ENCODE measurements at regions of chr15 and their contacts with region 1.

Region 1: GRCh38 chr15:59528965-59529402 is 82.6 kb upstream of the GCNT3 start:
- DNase-seq: peak; percentile 54 to 81 (median 59)
- ATAC-seq: peak; percentile 80
- H3K4me3 ChIP-seq: no peak overlapping the region
- H3K4me3 Mint-ChIP-seq: no peak overlapping the region
- H3K27ac ChIP-seq: no peak overlapping the region
- H3K27ac Mint-ChIP-seq: no peak overlapping the region
- H3K4me1 ChIP-seq: peaks cover 15% of the 10 kb centered on the region
- H3K4me1 Mint-ChIP-seq: peaks cover 13% of the 10 kb centered on the region
- H3K27me3 ChIP-seq: no peaks in the 10 kb centered on the region
- H3K27me3 Mint-ChIP-seq: peaks cover 3% of the 10 kb centered on the region
- CTCF ChIP-seq: peak; percentile 85

Region 2: DNA sequence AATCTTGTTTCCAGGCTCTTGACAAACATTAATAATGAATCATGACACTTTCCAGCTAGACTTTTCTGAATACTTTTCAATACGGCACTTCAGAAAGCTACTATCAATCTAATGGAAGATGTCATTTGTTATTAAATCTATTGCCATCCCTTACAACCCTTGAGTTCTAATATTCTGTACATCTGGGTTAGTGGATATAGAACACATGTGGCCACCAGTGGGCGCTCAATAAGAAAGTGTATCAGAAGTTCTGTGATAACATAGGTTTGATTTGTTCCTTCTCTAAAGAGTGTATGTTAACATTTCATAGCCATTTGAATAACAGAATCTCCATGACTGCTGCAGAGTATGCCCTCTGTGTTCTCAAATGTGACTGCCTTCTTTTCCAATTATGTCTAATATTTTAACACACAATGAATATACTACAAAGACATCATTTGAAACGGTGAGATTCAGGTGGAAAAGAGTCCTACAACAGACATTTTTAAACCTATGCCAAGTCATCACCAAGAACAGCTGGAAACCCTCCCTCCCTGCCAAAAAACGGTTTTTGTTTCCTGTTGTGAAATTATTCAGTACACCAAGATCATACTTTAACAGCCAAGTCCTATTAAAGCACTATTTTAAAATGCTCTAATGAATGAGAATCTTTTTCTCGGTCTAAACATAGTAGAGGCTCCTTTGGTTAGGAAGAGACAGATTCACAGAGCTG is 1485.6 kb before region 1 on chr15:
- CTCF ChIA-PET with region 1: no interaction called
- POLR2A ChIA-PET with region 1: no interaction called
- intact Hi-C with region 1: loop called in 1 of 2 experiments (anchors 5 kb)
- DNase-seq: peak in 9 of 14 experiments; percentile 13 to 56 (median 37)
- ATAC-seq: no peak
- H3K4me3 ChIP-seq: no peak overlapping the region
- H3K4me3 Mint-ChIP-seq: no peak overlapping the region
- H3K27ac ChIP-seq: no peak overlapping the region
- H3K27ac Mint-ChIP-seq: no peak overlapping the region
- H3K4me1 ChIP-seq: no peaks in the 10 kb centered on the region
- H3K4me1 Mint-ChIP-seq: no peaks in the 10 kb centered on the region
- H3K27me3 ChIP-seq: peaks cover 2 to 18% of the 10 kb centered on the region in 2 experiments
- H3K27me3 Mint-ChIP-seq: peaks cover 65% of the 10 kb centered on the region
- CTCF ChIP-seq: peak; percentile 63

Region 3: GRCh38 chr15:58852347-58852746 is 676.6 kb before region 1 on chr15:
- CTCF ChIA-PET with region 1: no interaction called
- POLR2A ChIA-PET with region 1: no interaction called
- intact Hi-C with region 1: no loop called
- DNase-seq: no peak
- ATAC-seq: no peak
- H3K4me3 ChIP-seq: no peak overlapping the region
- H3K4me3 Mint-ChIP-seq: no peak overlapping the region
- H3K27ac ChIP-seq: no peak overlapping the region
- H3K27ac Mint-ChIP-seq: no peak overlapping the region
- H3K4me1 ChIP-seq: no peaks in the 10 kb centered on the region
- H3K4me1 Mint-ChIP-seq: no peaks in the 10 kb centered on the region
- H3K27me3 ChIP-seq: no peaks in the 10 kb centered on the region
- H3K27me3 Mint-ChIP-seq: no peaks in the 10 kb centered on the region
- CTCF ChIP-seq: no peak

Region 4: GRCh38 chr15:58980351-58980939 is 548.5 kb before region 1 on chr15:
- CTCF ChIA-PET with region 1: interaction called, 3 read pairs
- POLR2A ChIA-PET with region 1: interaction called, 3 read pairs
- intact Hi-C with region 1: loop called (anchors 2 to 10 kb)
- DNase-seq: peak in 3 of 14 experiments; percentile 66 to 72 (median 70)
- ATAC-seq: peak; percentile 50
- H3K4me3 ChIP-seq: no peak overlapping the region
- H3K4me3 Mint-ChIP-seq: no peak overlapping the region
- H3K27ac ChIP-seq: no peak overlapping the region
- H3K27ac Mint-ChIP-seq: no peak overlapping the region
- H3K4me1 ChIP-seq: peaks cover 18% of the 10 kb centered on the region
- H3K4me1 Mint-ChIP-seq: peaks cover 32% of the 10 kb centered on the region
- H3K27me3 ChIP-seq: no peaks in the 10 kb centered on the region
- H3K27me3 Mint-ChIP-seq: no peaks in the 10 kb centered on the region
- CTCF ChIP-seq: peak; percentile 78

Region 5: DNA sequence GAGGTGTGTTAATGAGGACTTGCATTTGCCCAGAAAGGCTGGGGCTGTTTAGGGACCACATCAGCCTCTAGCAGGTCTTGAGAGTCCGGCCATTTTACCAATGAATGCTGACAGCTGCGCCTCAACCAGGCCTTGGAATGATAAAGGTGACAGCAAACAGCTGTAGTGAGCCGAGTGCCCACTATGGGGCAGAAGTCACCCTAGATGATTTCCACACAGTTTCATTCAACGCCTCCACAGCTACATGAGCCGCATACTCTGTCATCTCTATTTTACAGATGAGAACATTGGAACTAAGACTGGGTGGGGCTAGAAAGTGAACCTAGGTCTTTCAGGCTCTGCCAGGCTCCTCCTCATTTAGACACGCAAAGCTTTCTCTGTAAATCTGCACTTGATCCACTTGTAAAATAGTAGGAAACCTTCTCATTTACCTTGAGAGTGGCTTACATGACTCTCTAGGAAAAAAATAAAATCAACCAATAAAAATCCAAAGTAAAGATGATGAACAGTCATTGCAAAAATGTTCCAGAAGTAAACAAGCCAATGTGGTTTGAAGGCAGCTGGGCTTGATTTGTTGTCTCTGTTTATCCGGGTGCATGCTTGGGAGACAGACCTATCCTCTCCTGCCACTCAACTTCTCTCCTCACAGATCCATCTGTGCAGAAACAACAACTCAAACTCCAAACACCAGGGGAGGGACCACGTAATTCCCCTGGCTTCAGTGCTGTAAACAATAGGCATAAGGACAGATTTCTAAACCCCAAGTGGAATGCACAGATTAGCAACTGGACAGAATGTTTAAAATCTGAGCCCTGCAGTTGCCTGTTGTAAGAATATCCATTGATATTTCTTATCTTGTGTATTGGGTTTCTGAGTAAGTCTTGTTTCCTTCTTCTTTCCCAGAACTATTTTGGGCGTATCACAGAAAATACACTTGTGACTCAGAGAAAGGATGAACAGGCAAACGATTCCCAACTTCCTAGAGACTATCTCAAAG is 353.9 kb before region 1 on chr15:
- CTCF ChIA-PET with region 1: interaction called, 3 read pairs
- POLR2A ChIA-PET with region 1: no interaction called
- intact Hi-C with region 1: loop called in 1 of 2 experiments (anchors 2 kb)
- DNase-seq: peak in 8 of 14 experiments; percentile 3 to 60 (median 10)
- ATAC-seq: peak; percentile 60
- H3K4me3 ChIP-seq: no peak overlapping the region
- H3K4me3 Mint-ChIP-seq: no peak overlapping the region
- H3K27ac ChIP-seq: no peak overlapping the region
- H3K27ac Mint-ChIP-seq: no peak overlapping the region
- H3K4me1 ChIP-seq: no peaks in the 10 kb centered on the region
- H3K4me1 Mint-ChIP-seq: no peaks in the 10 kb centered on the region
- H3K27me3 ChIP-seq: no peaks in the 10 kb centered on the region
- H3K27me3 Mint-ChIP-seq: peaks cover 29% of the 10 kb centered on the region
- CTCF ChIP-seq: peak; percentile 36

Region 6: DNA sequence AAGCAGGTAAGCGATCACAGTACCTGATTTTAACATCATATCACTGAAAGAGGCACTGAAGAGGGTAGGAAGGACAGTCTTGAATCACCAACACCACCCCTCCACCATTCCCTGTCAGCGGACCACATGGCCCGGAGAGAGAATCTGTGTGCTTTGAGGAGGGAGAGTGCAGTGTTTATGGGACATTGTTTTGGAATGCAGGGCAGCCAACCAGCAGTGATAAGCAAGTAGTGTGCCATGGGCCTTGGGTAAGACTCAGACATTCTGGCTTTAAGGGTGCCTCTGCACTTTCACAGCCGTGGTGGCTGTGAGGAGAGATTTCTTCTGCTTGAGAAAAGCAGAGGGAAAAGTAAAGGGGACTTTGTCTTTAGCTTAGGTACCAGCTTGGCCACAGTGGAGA is 44.6 kb before region 1 on chr15:
- CTCF ChIA-PET with region 1: no interaction called
- POLR2A ChIA-PET with region 1: no interaction called
- intact Hi-C with region 1: no loop called
- DNase-seq: no peak
- ATAC-seq: no peak
- H3K4me3 ChIP-seq: no peak overlapping the region
- H3K4me3 Mint-ChIP-seq: no peak overlapping the region
- H3K27ac ChIP-seq: no peak overlapping the region
- H3K27ac Mint-ChIP-seq: no peak overlapping the region
- H3K4me1 ChIP-seq: no peaks in the 10 kb centered on the region
- H3K4me1 Mint-ChIP-seq: no peaks in the 10 kb centered on the region
- H3K27me3 ChIP-seq: no peaks in the 10 kb centered on the region
- H3K27me3 Mint-ChIP-seq: peaks cover 8% of the 10 kb centered on the region
- CTCF ChIP-seq: no peak

Region 7: DNA sequence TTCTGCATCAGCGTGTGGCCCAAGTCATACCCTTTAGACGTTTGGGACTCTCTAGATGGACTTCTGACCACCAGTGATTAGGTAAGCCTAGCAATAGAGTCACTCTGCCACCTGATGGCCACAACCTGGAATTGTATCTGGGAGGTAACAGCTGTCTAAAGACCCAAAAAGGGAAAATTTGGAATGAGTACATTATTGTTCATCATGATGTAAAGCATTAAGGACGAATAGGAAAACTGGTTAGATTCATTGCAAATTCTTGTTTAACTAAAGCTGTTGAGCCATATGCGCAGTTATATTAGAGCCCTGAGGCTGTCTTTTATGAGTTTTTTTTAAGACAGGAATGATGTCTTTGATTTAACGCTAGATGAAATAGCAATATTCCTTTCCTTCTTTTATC is 27.4 kb before region 1 on chr15:
- CTCF ChIA-PET with region 1: no interaction called
- POLR2A ChIA-PET with region 1: no interaction called
- intact Hi-C with region 1: no loop called
- DNase-seq: peak in 3 of 14 experiments; percentile 13 to 45 (median 40)
- ATAC-seq: no peak
- H3K4me3 ChIP-seq: no peak overlapping the region
- H3K4me3 Mint-ChIP-seq: no peak overlapping the region
- H3K27ac ChIP-seq: no peak overlapping the region
- H3K27ac Mint-ChIP-seq: no peak overlapping the region
- H3K4me1 ChIP-seq: no peaks in the 10 kb centered on the region
- H3K4me1 Mint-ChIP-seq: no peaks in the 10 kb centered on the region
- H3K27me3 ChIP-seq: no peaks in the 10 kb centered on the region
- H3K27me3 Mint-ChIP-seq: peaks cover 9% of the 10 kb centered on the region
- CTCF ChIP-seq: no peak

Region 8: DNA sequence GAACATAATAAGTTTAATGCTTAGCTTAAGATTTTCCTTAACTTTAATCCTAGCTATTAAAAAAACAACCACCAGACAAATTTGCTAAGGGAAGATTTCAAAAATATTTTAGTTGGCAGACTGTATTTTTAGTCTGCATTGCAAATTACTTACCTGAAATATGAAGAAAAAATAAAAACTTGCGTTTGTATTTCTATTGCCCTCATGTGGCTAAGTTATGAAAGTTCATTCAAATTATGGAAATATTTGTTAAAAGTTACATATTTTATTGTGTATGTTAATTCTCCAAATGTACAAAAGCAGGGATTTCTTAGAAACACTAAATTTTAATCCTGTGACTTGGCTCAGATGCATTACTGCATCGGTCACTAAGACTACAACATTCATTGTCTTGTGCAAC is 113.4 kb after region 1 on chr15:
- CTCF ChIA-PET with region 1: no interaction called
- POLR2A ChIA-PET with region 1: no interaction called
- intact Hi-C with region 1: loop called in 1 of 2 experiments (anchors 5 kb)
- DNase-seq: no peak
- ATAC-seq: no peak
- H3K4me3 ChIP-seq: no peak overlapping the region
- H3K4me3 Mint-ChIP-seq: no peak overlapping the region
- H3K27ac ChIP-seq: no peak overlapping the region
- H3K27ac Mint-ChIP-seq: no peak overlapping the region
- H3K4me1 ChIP-seq: no peaks in the 10 kb centered on the region
- H3K4me1 Mint-ChIP-seq: peaks cover 8% of the 10 kb centered on the region
- H3K27me3 ChIP-seq: no peaks in the 10 kb centered on the region
- H3K27me3 Mint-ChIP-seq: no peaks in the 10 kb centered on the region
- CTCF ChIP-seq: no peak

Region 9: DNA sequence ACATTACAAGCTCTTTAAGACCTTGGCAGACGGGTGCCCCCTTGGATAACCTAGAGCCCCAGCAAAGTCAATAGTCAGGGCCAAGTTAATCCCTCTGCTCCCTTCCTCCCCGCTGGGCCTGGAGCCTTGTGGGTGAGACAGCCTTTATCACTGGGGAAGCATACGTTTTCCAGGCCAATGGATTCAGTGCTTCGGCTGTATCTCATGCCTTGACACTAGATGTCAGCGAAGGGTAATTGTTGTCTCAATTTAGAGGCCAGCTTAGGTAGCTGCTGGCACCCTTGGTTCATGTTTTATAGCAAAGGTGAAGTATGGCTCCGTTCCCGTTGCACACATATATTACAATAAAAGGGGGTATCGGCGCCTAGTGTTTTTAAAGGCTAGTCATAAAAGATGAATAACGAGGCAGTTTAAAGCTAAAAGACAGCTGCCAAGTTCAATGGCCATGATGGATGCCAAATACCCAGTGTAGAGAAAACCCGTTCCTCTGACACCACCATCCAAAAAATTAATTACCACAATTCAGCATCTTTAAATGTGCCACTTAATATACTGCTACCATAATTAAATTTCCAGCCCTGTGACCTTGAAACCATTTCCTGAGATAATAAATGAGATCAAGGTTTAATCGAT is 212.4 kb after region 1 on chr15:
- CTCF ChIA-PET with region 1: no interaction called
- POLR2A ChIA-PET with region 1: no interaction called
- intact Hi-C with region 1: no loop called
- DNase-seq: peak in 4 of 14 experiments; percentile 4 to 37 (median 18)
- ATAC-seq: no peak
- H3K4me3 ChIP-seq: no peak overlapping the region
- H3K4me3 Mint-ChIP-seq: no peak overlapping the region
- H3K27ac ChIP-seq: no peak overlapping the region
- H3K27ac Mint-ChIP-seq: no peak overlapping the region
- H3K4me1 ChIP-seq: no peaks in the 10 kb centered on the region
- H3K4me1 Mint-ChIP-seq: no peaks in the 10 kb centered on the region
- H3K27me3 ChIP-seq: peaks cover 2 to 7% of the 10 kb centered on the region in 2 experiments
- H3K27me3 Mint-ChIP-seq: peaks cover 42% of the 10 kb centered on the region
- CTCF ChIP-seq: no peak

Measured in CD4-positive, alpha-beta T cell (primary cell).